PC-9 (cell line): ENCODE measurements at regions of chr4 and their contacts with region 1.

Region 1: GRCh38 chr4:112031712-112032328 is 113.4 kb upstream of the FAM241A start:
- DNase-seq: peak; percentile 20 to 46
- H3K4me3 ChIP-seq: no peak overlapping the region
- H3K27ac ChIP-seq: no peak overlapping the region
- H3K4me1 ChIP-seq: no peaks in the 10 kb centered on the region
- H3K27me3 ChIP-seq: no peaks in the 10 kb centered on the region
- CTCF ChIP-seq: peak; percentile 88

Region 2: GRCh38 chr4:110516106-110516922 is 1515.5 kb before region 1 on chr4:
- CTCF ChIA-PET with region 1: no interaction called
- POLR2A ChIA-PET with region 1: no interaction called
- intact Hi-C with region 1: loop called (anchors 5 kb)
- DNase-seq: peak; percentile 64 to 72
- H3K4me3 ChIP-seq: peak overlapping the region; percentile 53; the same call in 1 of the 2 replicates
- H3K27ac ChIP-seq: no peak overlapping the region
- H3K4me1 ChIP-seq: no peaks in the 10 kb centered on the region
- H3K27me3 ChIP-seq: no peaks in the 10 kb centered on the region
- CTCF ChIP-seq: peak; percentile 78

Region 3: DNA sequence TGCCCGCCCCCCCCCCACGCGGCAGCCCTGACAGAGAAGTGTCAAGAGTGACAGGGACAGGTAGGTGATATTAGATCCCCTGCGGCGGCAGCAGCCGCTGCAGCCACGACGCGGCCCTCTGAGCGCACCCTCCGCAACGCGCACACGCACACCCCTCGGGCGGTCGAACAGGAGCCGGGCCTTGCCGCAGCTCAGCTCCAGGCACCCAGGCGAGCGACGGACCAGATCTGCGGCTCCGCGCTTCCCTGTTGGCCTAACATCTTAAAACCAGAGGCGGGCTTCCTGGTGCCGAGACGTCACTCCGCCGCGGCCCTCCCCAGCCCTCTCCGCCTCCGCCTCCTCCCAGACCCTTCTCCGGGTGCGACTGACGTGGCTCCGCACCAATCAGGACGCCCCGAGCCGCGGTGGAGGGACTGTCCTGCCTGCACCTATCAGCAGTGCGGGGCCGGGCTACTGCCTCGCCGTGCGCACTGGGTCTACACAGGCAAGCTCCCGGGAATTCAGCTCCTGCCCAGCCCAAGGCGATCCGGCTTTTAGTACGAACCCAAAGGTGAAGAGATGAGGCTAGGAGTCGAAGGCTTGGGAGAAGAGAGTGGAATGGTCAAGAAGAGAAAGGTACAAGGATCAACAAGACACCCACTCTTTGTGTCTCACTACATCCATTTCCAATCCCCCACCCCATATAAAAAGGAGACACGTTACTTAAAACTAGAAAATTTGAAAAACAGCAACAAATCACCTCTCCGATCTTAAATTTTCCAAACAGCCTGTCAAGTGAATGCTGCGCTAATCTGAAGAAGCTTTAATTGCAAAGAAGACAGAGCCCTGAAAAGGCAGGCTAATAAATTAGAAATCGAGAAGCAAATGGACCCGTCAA is 1408.7 kb before region 1 on chr4 and contains the start of gene PITX2:
- CTCF ChIA-PET with region 1: no interaction called
- POLR2A ChIA-PET with region 1: no interaction called
- intact Hi-C with region 1: loop called (anchors 10 kb)
- DNase-seq: peak; percentile 83 to 94
- H3K4me3 ChIP-seq: peak within 1 kb of the TSS; percentile 59
- H3K27ac ChIP-seq: no peak within 1 kb of the TSS
- H3K4me1 ChIP-seq: no peaks in the 10 kb centered on the region
- H3K27me3 ChIP-seq: no peaks in the 10 kb centered on the region
- CTCF ChIP-seq: no peak
- total RNA-seq, gene PITX2: 0.48 and 1.6 TPM in 2 replicates

Region 4: DNA sequence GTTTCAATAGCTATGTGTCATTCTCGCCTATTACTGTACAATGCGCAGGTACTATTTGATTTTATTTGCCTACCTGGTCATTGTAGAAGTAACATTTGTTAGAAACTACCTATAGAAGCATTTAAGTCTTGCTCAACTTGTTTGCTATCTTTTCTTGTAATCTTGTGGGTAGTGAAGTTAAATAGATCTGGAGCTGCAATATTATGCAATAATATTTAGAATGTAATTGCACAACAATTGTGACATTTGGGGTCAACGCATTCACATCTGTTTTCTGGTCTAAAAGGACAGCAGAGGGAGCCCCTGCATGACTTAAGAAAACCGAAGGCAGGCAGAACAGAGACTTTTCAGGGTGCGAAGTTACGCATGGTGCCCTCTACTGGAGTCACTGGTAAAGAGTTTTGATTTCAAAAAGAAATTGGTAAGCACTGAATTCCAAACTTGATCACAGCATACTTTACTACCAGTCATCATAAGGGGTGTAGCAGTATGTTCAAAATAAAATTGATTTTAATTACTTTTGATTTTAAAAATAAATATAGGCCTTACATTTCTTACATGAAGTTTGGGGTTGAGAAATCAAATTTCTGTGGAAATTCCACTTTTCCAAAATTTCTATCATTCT is 389.8 kb before region 1 on chr4:
- CTCF ChIA-PET with region 1: interaction called, 4 read pairs
- POLR2A ChIA-PET with region 1: no interaction called
- intact Hi-C with region 1: loop called (anchors 1 kb)
- DNase-seq: peak; percentile 68 to 84
- H3K4me3 ChIP-seq: no peak overlapping the region
- H3K27ac ChIP-seq: no peak overlapping the region
- H3K4me1 ChIP-seq: no peaks in the 10 kb centered on the region; the same call in 1 of the 2 replicates
- H3K27me3 ChIP-seq: no peaks in the 10 kb centered on the region
- CTCF ChIP-seq: peak; percentile 84

Region 5: DNA sequence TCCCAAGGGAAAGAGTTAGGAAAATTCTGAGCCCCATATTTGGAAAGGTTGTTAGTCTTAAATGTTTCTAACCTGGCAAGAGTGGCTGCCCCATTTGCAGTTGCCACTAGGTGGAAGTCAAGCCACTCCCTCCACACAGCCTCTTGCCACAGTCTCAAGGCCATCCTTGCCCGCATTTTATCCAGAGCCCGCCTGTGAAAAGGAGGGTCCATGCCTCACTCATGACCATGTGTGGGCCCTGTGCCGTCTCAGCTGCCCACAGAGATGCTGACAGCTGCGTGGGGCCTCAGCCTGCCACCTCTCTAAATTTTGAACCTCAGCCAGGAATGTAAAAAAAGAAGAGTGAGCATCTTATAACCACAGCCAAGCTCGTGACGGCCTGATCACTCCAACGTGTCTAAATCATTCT is 88.0 kb before region 1 on chr4:
- CTCF ChIA-PET with region 1: interaction called, 5 read pairs
- POLR2A ChIA-PET with region 1: no interaction called
- intact Hi-C with region 1: loop called (anchors 1 kb)
- DNase-seq: peak in 1 of 2 experiments; percentile 39
- H3K4me3 ChIP-seq: no peak overlapping the region
- H3K27ac ChIP-seq: no peak overlapping the region
- H3K4me1 ChIP-seq: no peaks in the 10 kb centered on the region
- H3K27me3 ChIP-seq: no peaks in the 10 kb centered on the region
- CTCF ChIP-seq: peak; percentile 63

Region 6: GRCh38 chr4:112003231-112003907 is 28.5 kb before region 1 on chr4:
- CTCF ChIA-PET with region 1: no interaction called
- POLR2A ChIA-PET with region 1: no interaction called
- intact Hi-C with region 1: no loop called
- DNase-seq: no peak
- H3K4me3 ChIP-seq: no peak overlapping the region
- H3K27ac ChIP-seq: no peak overlapping the region
- H3K4me1 ChIP-seq: no peaks in the 10 kb centered on the region
- H3K27me3 ChIP-seq: no peaks in the 10 kb centered on the region
- CTCF ChIP-seq: no peak

Region 7: DNA sequence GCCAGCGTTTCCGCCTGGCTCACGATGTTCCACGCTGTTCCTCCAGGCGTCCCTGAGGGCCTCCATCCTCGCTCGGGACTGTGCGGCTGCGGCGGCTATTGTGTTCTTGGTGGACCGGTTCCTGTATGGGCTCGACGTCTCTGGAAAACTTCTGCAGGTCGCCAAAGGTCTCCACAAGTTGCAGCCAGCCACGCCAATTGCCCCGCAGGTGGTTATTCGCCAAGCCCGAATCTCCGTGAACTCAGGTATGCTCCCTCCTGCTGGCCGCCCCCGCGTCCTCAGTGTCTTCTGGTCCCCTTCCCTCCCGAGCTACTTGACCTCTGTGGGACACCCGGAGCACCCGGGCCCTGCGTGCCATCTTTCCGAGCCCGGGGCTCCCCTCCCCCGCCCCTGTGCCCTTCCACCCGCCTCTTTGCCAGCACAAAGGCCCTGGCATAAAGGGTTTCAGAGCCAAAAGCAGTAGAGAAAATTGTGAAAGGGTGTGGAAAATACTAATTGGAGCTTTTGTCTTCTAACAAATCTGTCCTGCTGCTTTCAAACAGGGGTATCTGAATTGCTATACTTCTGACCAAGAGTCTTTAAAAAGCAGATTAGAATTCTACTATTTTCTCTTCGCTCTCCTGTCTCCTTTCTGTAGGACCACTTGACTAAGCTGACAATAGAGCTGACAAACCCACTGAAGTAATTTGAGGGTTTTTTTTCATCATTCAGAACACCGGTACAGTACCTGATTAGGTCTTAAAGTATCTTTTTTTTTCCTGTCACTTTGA is 380.1 kb after region 1 on chr4:
- CTCF ChIA-PET with region 1: no interaction called
- POLR2A ChIA-PET with region 1: no interaction called
- intact Hi-C with region 1: no loop called
- DNase-seq: no peak
- H3K4me3 ChIP-seq: no peak overlapping the region
- H3K27ac ChIP-seq: no peak overlapping the region
- H3K4me1 ChIP-seq: peaks cover 6% of the 10 kb centered on the region; the same call in 1 of the 2 replicates
- H3K27me3 ChIP-seq: no peaks in the 10 kb centered on the region
- CTCF ChIP-seq: no peak